WTC11 (cell line): ENCODE measurements at regions of chr11 and their contacts with region 1.

Region 1: GRCh38 chr11:17730608-17731462 is 3.7 kb upstream of the KCNC1 start:
- DNase-seq: peak; percentile 90
- ATAC-seq: peak; percentile 77
- H3K4me3 Mint-ChIP-seq: no peak overlapping the region
- H3K27ac Mint-ChIP-seq: no peak overlapping the region
- H3K4me1 Mint-ChIP-seq: peaks cover 3% of the 10 kb centered on the region; the same call in 1 of the 2 replicates
- H3K27me3 Mint-ChIP-seq: peaks cover 54% of the 10 kb centered on the region
- CTCF ChIP-seq: peak; percentile 41

Region 2: GRCh38 chr11:17544181-17544622 is 186.6 kb before region 1 on chr11 and contains the start of gene USH1C:
- CTCF ChIA-PET with region 1: interaction called, 14 read pairs
- POLR2A ChIA-PET with region 1: interaction called, 3 read pairs
- DNase-seq: peak; percentile 79
- ATAC-seq: peak; percentile 57
- H3K4me3 Mint-ChIP-seq: peak within 1 kb of the TSS; percentile 72
- H3K27ac Mint-ChIP-seq: 0 out of 2 replicates have a peak within 1 kb of the TSS, but pooled peaks have one; percentile 30
- H3K4me1 Mint-ChIP-seq: peaks cover 49% of the 10 kb centered on the region
- H3K27me3 Mint-ChIP-seq: peaks cover 36% of the 10 kb centered on the region
- CTCF ChIP-seq: no peak
- total RNA-seq, gene USH1C: 3.3 to 3.9 TPM (median 3.7 TPM) in 3 replicates

Region 3: GRCh38 chr11:17695454-17696441 is 35.1 kb before region 1 on chr11:
- CTCF ChIA-PET with region 1: interaction called, 14 read pairs
- POLR2A ChIA-PET with region 1: no interaction called
- DNase-seq: peak; percentile 31
- ATAC-seq: peak; percentile 77
- H3K4me3 Mint-ChIP-seq: peak overlapping the region; percentile 67
- H3K27ac Mint-ChIP-seq: no peak overlapping the region
- H3K4me1 Mint-ChIP-seq: peaks cover 4% of the 10 kb centered on the region; the same call in 1 of the 2 replicates
- H3K27me3 Mint-ChIP-seq: peaks cover 59% of the 10 kb centered on the region
- CTCF ChIP-seq: no peak

Region 4: DNA sequence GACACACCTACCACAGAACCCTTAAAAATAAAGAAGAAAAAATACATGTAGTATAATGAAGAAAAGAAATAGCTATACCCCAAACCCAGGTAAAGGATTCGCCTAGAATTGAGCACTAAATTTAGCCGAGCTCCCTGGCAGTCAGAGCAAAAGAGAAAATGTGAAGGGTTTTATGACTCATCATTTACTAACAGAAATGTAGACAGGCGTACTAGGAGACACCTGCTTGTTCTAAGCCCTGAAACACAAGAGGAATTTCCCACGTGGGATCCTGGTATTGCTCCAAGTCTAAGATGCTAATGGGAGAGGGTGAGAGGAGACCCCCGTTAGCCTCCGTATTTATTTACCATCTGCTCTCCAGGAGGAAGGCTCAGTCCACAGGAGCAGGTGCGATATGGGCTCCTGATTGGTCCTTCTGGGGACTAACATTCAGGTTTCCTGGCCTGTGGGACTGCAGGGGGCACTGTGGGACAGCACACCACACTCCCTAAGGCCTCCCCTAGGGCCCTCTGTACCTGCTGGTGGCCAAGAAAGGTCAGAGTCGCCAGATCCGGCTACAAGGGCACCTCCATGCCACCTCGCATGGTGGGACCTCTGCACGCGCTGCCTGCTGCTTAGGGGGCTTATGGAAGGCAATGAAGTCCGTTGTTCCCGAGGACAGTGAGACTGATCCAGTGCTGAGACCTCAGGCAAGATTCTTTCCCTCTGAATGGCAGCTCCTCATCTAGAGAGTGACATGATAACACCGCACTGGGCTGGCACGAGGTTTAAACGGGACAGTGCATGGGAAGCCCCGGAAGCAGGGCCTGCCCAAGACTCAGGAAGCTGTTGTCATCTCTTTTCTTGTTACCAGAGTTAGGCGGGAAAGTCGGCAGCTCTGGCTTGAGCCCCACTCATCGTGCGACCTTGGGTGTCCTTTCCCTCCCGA is 29.5 kb after region 1 on chr11:
- CTCF ChIA-PET with region 1: interaction called, 72 read pairs
- POLR2A ChIA-PET with region 1: no interaction called
- DNase-seq: peak; percentile 87
- ATAC-seq: peak; percentile 98
- H3K4me3 Mint-ChIP-seq: no peak overlapping the region
- H3K27ac Mint-ChIP-seq: no peak overlapping the region
- H3K4me1 Mint-ChIP-seq: 0 out of 2 replicates have a peak, but pooled peaks cover 4% of the 10 kb centered on the region
- H3K27me3 Mint-ChIP-seq: no peaks in the 10 kb centered on the region; the same call in 1 of the 2 replicates
- CTCF ChIP-seq: peak; percentile 28; the same call in 1 of the 2 replicates

Region 5: GRCh38 chr11:17906436-17906835 is 175.6 kb after region 1 on chr11:
- CTCF ChIA-PET with region 1: interaction called, 57 read pairs
- POLR2A ChIA-PET with region 1: no interaction called
- DNase-seq: peak; percentile 87
- ATAC-seq: peak; percentile 99
- H3K4me3 Mint-ChIP-seq: no peak overlapping the region
- H3K27ac Mint-ChIP-seq: no peak overlapping the region
- H3K4me1 Mint-ChIP-seq: peaks cover 9% of the 10 kb centered on the region
- H3K27me3 Mint-ChIP-seq: no peaks in the 10 kb centered on the region
- CTCF ChIP-seq: no peak

Region 6: GRCh38 chr11:17939542-17939941 is 208.7 kb after region 1 on chr11:
- CTCF ChIA-PET with region 1: no interaction called
- POLR2A ChIA-PET with region 1: no interaction called
- DNase-seq: no peak
- ATAC-seq: no peak
- H3K4me3 Mint-ChIP-seq: no peak overlapping the region
- H3K27ac Mint-ChIP-seq: no peak overlapping the region
- H3K4me1 Mint-ChIP-seq: peaks cover 3% of the 10 kb centered on the region; the same call in 1 of the 2 replicates
- H3K27me3 Mint-ChIP-seq: no peaks in the 10 kb centered on the region
- CTCF ChIP-seq: no peak

Region 7: GRCh38 chr11:17972987-17973386 is 242.2 kb after region 1 on chr11:
- CTCF ChIA-PET with region 1: interaction called, 99 read pairs
- POLR2A ChIA-PET with region 1: no interaction called
- DNase-seq: peak; percentile 79
- ATAC-seq: peak; percentile 99
- H3K4me3 Mint-ChIP-seq: no peak overlapping the region
- H3K27ac Mint-ChIP-seq: peak overlapping the region; percentile 74
- H3K4me1 Mint-ChIP-seq: 0 out of 2 replicates have a peak, but pooled peaks cover 3% of the 10 kb centered on the region
- H3K27me3 Mint-ChIP-seq: no peaks in the 10 kb centered on the region; the same call in 1 of the 2 replicates
- CTCF ChIP-seq: peak; percentile 67

Region 8: GRCh38 chr11:18046116-18046777 is 315.4 kb after region 1 on chr11 and contains the start of gene TPH1:
- CTCF ChIA-PET with region 1: no interaction called
- POLR2A ChIA-PET with region 1: no interaction called
- DNase-seq: peak; percentile 68
- ATAC-seq: peak; percentile 99
- H3K4me3 Mint-ChIP-seq: peak within 1 kb of the TSS; percentile 56
- H3K27ac Mint-ChIP-seq: no peak within 1 kb of the TSS
- H3K4me1 Mint-ChIP-seq: peaks cover 2% of the 10 kb centered on the region; the same call in 1 of the 2 replicates
- H3K27me3 Mint-ChIP-seq: peaks cover 69% of the 10 kb centered on the region
- CTCF ChIP-seq: no peak
- total RNA-seq, gene TPH1: 0.07 to 0.14 TPM (median 0.11 TPM) in 3 replicates